AG04450 (cell line): ENCODE measurements at regions of chr7 and their contacts with region 1.

Region 1: DNA sequence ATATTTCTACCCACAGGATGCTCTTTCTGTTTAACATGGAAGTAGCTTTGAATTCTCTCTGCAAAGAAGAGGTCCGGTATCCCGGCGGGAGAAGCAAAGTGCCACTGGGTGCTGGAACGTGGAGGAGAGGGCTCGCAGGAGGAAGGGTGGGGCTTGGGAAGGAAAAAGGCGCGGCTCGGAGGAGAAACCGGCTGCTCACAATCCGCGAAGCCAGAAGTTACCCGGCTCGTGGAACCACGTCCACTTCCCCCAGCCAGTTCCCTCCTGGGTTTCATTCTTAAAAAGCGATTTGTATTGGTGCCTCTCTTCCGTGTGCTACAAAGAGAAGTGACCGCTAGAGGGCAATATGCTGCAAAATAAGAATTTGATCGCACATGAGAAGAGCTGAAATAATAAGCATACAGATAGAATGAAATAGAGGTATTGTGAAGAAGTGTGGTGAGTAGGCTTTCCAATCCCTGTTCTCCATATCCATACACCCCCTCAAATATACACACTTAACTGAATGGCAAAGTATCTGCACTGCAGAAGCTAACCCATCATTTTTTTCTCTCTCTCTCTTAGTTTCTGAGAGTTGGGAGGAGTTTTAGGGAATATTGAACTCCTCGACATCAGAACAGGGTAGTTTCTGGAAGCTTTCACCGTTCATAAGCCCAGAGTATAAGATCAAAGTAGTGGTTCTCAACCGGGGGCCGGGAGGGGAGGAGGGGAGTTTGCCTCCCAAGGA is 31.1 kb downstream of the TRIL start:
- DNase-seq: peak; percentile 76
- H3K4me3 ChIP-seq: peak overlapping the region; percentile 72
- H3K27ac ChIP-seq: no peak overlapping the region
- H3K27me3 ChIP-seq: peaks cover 27% of the 10 kb centered on the region
- CTCF ChIP-seq: peak; percentile 88

Region 2: DNA sequence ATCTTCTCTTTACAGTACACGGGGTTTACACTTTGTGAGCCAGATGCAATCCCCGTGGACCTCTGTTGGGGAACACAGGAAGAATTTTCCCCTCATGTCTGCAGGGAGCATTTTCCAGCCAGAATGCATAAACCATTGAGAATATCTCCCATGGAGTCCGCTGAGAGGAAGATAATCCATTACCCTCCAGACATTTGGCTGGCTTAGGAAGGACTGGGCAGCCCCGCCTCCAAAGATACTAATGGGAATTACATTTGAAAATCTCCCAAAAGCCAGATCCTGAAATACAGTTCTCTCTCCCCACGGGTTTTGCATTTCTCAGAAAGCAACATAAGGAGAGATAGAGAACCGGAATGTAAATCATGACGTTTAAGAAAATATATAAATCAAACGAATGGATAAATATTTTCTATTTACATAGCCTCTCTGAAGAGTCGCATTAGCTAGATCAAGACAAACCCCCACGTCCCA is 22.4 kb before region 1 on chr7:
- CTCF ChIA-PET with region 1: interaction called, 81 read pairs
- POLR2A ChIA-PET with region 1: no interaction called
- DNase-seq: no peak
- H3K4me3 ChIP-seq: peak overlapping the region; percentile 35
- H3K27ac ChIP-seq: no peak overlapping the region
- H3K27me3 ChIP-seq: peaks cover 18% of the 10 kb centered on the region
- CTCF ChIP-seq: no peak

Region 3: DNA sequence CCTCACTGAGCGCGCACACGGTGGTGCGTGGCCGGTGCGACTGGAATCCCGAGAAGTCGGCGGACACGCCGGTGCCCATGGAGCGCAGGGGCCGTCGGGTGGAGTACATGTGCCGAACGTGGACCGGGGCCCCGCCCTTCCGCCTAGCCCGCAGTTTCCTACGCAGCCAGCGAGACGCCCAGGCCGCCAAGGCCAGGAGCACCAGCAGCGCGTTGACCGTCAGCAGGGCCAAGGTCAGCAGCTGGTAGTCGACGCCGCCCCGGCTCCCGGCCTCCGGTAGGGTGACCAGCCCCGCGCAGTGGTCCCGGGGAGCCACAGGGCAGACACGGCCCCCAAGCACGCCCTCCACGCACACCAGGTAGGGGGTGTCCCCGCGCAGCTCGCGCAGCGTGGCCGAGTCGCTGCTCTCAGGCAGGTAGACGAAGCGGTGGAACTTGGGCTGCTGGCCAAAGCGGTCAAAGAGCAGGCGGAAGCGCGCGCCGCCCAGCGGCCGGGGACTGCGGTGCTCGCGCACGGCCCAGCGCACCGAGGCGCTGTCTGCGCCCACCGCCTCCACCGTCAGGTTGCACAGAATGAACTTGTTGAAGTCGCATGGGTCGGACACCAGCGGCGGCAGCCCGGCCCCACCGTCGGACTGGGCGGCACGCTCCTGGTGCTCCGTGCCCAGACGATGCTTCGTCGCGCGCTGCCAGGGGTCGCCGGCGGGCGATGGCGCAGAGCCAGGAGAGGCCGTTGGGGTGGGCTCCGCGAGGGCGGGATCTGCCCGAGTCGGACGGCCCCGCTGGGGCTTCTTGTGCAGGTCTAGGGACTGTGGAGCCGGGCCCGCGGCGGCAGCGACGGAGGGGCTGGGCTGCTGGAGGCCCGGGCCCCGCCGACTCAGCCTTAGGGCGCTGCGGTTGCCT is 28.9 kb after region 1 on chr7:
- CTCF ChIA-PET with region 1: interaction called, 18 read pairs
- POLR2A ChIA-PET with region 1: no interaction called
- DNase-seq: no peak
- H3K4me3 ChIP-seq: peak overlapping the region; percentile 10; the same call in 1 of the 2 replicates
- H3K27ac ChIP-seq: no peak overlapping the region
- H3K27me3 ChIP-seq: peaks cover 57% of the 10 kb centered on the region
- CTCF ChIP-seq: peak; percentile 46

Region 4: DNA sequence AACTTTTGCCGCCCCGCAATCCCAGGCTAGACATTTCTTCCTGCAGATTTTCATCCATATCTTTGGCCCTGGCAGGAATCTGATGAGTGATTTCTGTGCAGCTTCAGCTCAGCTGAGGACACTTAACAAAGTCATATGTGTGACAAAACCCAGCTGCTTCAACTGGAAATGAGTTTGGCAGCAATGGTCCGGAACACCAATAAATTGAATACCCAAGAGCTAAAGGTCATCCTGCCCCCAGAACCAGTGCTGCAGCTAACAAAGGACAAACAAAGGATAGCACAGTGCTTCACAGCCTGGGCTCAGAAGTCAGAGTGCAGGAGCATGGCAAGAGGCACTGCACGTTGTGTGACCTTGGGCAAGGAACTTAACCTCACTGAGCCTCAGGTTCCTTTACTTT is 71.1 kb after region 1 on chr7:
- CTCF ChIA-PET with region 1: interaction called, 13 read pairs
- POLR2A ChIA-PET with region 1: no interaction called
- DNase-seq: no peak
- H3K4me3 ChIP-seq: no peak overlapping the region
- H3K27ac ChIP-seq: no peak overlapping the region
- H3K27me3 ChIP-seq: peaks cover 27% of the 10 kb centered on the region
- CTCF ChIP-seq: no peak

Region 5: DNA sequence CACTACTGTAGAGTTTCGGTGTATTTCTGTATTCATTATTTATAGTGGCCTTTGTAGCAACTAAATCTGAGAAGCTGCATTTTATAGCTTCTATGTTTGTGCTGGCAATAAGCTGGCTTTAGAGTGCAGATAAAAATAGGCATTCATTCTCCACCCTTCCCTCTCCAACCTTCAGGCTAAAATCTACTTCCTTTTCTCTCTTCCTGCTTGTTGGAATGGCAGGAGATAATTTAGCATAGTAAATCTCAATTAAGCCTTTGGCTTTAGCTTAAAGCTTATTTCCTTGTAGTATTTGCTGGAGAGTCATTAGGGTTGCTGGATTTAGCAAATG is 160.8 kb after region 1 on chr7:
- CTCF ChIA-PET with region 1: interaction called, 930 read pairs
- POLR2A ChIA-PET with region 1: no interaction called
- DNase-seq: no peak
- H3K4me3 ChIP-seq: no peak overlapping the region
- H3K27ac ChIP-seq: no peak overlapping the region
- H3K27me3 ChIP-seq: peaks cover 6% of the 10 kb centered on the region
- CTCF ChIP-seq: no peak

Region 6: GRCh38 chr7:29119538-29120199 is 192.6 kb after region 1 on chr7:
- CTCF ChIA-PET with region 1: interaction called, 23 read pairs
- POLR2A ChIA-PET with region 1: no interaction called
- DNase-seq: no peak
- H3K4me3 ChIP-seq: no peak overlapping the region
- H3K27ac ChIP-seq: no peak overlapping the region
- H3K27me3 ChIP-seq: no peaks in the 10 kb centered on the region
- CTCF ChIP-seq: no peak